Activated CD4-positive, alpha-beta memory T cell treated with anti-CD3 and anti-CD28 coated beads for 36 hours (primary cell): ENCODE measurements at regions of chr3 and their contacts with region 1.

Region 1: GRCh38 chr3:129249276-129250065 is at the start of gene COPG1:
- DNase-seq: peak; percentile 92
- H3K4me3 Mint-ChIP-seq: peak within 1 kb of the TSS; percentile 89
- H3K27ac Mint-ChIP-seq: peak within 1 kb of the TSS; percentile 93
- H3K4me1 Mint-ChIP-seq: peaks cover 38% of the 10 kb centered on the region
- H3K27me3 Mint-ChIP-seq: no peaks in the 10 kb centered on the region
- total RNA-seq, gene COPG1: 154 to 162 TPM

Region 2: GRCh38 chr3:129016356-129016719 is 233.1 kb before region 1 on chr3:
- CTCF ChIA-PET with region 1: interaction called, 14 read pairs
- POLR2A ChIA-PET with region 1: no interaction called
- intact Hi-C with region 1: no loop called
- DNase-seq: peak; percentile 80
- H3K4me3 Mint-ChIP-seq: peak overlapping the region; percentile 62
- H3K27ac Mint-ChIP-seq: peak overlapping the region; percentile 93
- H3K4me1 Mint-ChIP-seq: peaks cover 34% of the 10 kb centered on the region
- H3K27me3 Mint-ChIP-seq: no peaks in the 10 kb centered on the region

Region 3: GRCh38 chr3:129058441-129059200 is 190.8 kb before region 1 on chr3:
- CTCF ChIA-PET with region 1: interaction called, 113 read pairs
- POLR2A ChIA-PET with region 1: interaction called, 12 read pairs
- intact Hi-C with region 1: loop called (anchors 1 kb)
- DNase-seq: peak; percentile 38
- H3K4me3 Mint-ChIP-seq: no peak overlapping the region
- H3K27ac Mint-ChIP-seq: no peak overlapping the region
- H3K4me1 Mint-ChIP-seq: peaks cover 7% of the 10 kb centered on the region
- H3K27me3 Mint-ChIP-seq: no peaks in the 10 kb centered on the region

Region 4: GRCh38 chr3:129160891-129161859 is 88.3 kb before region 1 on chr3 and contains the start of gene ISY1:
- CTCF ChIA-PET with region 1: interaction called, 55 read pairs
- POLR2A ChIA-PET with region 1: interaction called, 6 read pairs
- intact Hi-C with region 1: loop called (anchors 1 kb)
- DNase-seq: peak; percentile 93
- H3K4me3 Mint-ChIP-seq: peak within 1 kb of the TSS; percentile 98
- H3K27ac Mint-ChIP-seq: peak within 1 kb of the TSS; percentile 100
- H3K4me1 Mint-ChIP-seq: peaks cover 31% of the 10 kb centered on the region
- H3K27me3 Mint-ChIP-seq: no peaks in the 10 kb centered on the region
- total RNA-seq, gene ISY1: 60.7 to 61.7 TPM

Region 5: GRCh38 chr3:129183569-129184395 is 65.7 kb before region 1 on chr3 and contains the start of gene CNBP:
- CTCF ChIA-PET with region 1: interaction called, 23 read pairs
- POLR2A ChIA-PET with region 1: interaction called, 9 read pairs
- intact Hi-C with region 1: loop called (anchors 1 kb)
- DNase-seq: peak; percentile 95
- H3K4me3 Mint-ChIP-seq: peak within 1 kb of the TSS; percentile 97
- H3K27ac Mint-ChIP-seq: peak within 1 kb of the TSS; percentile 96
- H3K4me1 Mint-ChIP-seq: peaks cover 27% of the 10 kb centered on the region
- H3K27me3 Mint-ChIP-seq: no peaks in the 10 kb centered on the region
- total RNA-seq, gene CNBP: 342 to 348 TPM

Region 6: DNA sequence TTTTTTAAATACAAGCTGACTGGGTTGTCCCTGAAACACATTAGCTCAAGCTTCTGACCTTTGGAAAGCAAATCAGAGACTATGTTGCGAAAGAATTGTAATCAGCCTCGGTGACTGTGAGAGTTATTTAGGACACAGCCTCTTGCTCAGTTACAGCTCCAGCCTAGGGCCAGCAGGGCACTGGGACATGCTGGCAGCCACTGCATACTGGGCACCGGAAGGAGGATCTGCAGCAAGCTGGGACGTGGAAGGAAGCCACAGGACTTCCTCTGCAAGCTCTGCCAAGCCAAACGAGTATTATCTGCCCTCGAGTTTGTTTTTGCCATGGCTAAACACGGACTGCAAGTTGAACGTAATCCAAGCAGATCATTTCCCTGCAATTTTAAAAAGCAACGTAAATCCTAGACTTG is 24.5 kb before region 1 on chr3:
- CTCF ChIA-PET with region 1: interaction called, 14 read pairs
- POLR2A ChIA-PET with region 1: interaction called, 6 read pairs
- intact Hi-C with region 1: no loop called
- DNase-seq: peak; percentile 38
- H3K4me3 Mint-ChIP-seq: peak overlapping the region; percentile 49
- H3K27ac Mint-ChIP-seq: peak overlapping the region; percentile 55
- H3K4me1 Mint-ChIP-seq: peaks cover 16% of the 10 kb centered on the region
- H3K27me3 Mint-ChIP-seq: no peaks in the 10 kb centered on the region

Region 7: GRCh38 chr3:129278439-129278970 is 29.0 kb after region 1 on chr3 and contains the start of gene HMCES:
- CTCF ChIA-PET with region 1: interaction called, 5 read pairs
- POLR2A ChIA-PET with region 1: interaction called, 9 read pairs
- intact Hi-C with region 1: loop called (anchors 2 kb)
- DNase-seq: peak; percentile 97
- H3K4me3 Mint-ChIP-seq: peak within 1 kb of the TSS; percentile 89
- H3K27ac Mint-ChIP-seq: peak within 1 kb of the TSS; percentile 90
- H3K4me1 Mint-ChIP-seq: peaks cover 52% of the 10 kb centered on the region
- H3K27me3 Mint-ChIP-seq: no peaks in the 10 kb centered on the region
- total RNA-seq, gene HMCES: 58.4 to 61.5 TPM

Region 8: DNA sequence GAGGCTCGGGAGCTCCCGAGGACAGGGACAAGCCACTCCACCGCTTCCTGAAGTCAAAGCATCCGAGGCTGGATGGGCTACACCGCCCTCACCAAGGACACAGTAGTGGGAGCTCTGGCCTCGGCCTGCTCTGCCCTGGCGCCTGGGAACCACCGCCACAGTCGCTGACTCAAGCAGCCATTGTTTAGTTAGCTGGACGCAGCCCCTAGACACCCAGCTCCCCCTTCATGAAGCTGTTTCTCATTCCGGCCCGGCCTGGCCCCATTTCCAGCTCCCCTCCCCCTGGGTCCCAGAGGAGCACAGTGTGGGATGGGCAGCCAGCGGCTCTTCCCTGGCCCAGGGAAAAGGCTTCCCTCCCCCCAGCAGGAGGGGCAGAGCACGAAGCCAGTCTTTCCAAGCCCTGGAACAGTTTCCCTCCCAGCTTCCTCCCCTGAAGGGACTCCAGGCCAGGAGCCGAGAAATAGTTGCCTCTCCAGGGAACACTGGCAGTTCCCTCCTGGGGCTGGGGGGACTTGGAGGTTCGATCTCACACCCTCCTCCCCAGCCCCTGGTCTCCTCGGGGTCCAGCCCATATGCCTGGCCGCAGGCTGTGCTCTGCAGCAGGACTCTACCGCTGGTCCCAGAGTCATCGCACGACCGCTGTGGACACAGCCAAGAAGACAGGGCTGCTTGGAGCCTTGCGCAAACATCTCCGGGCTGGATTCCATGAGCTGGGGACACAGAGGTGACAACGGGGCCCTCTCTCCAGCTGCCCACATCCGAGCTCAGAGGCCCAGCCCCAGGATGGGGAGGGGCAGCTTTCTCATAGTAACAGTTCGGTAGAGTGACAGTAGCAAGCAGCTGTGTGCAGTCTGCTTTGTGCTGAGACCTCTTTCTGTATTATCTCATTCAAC is 347.0 kb after region 1 on chr3:
- CTCF ChIA-PET with region 1: no interaction called
- POLR2A ChIA-PET with region 1: no interaction called
- intact Hi-C with region 1: no loop called
- DNase-seq: no peak
- H3K4me3 Mint-ChIP-seq: no peak overlapping the region
- H3K27ac Mint-ChIP-seq: no peak overlapping the region
- H3K4me1 Mint-ChIP-seq: peaks cover 14% of the 10 kb centered on the region
- H3K27me3 Mint-ChIP-seq: no peaks in the 10 kb centered on the region

Region 9: GRCh38 chr3:129663026-129663446 is 413.6 kb after region 1 on chr3:
- CTCF ChIA-PET with region 1: no interaction called
- POLR2A ChIA-PET with region 1: no interaction called
- intact Hi-C with region 1: no loop called
- DNase-seq: no peak
- H3K4me3 Mint-ChIP-seq: no peak overlapping the region
- H3K27ac Mint-ChIP-seq: no peak overlapping the region
- H3K4me1 Mint-ChIP-seq: peaks cover 5% of the 10 kb centered on the region
- H3K27me3 Mint-ChIP-seq: no peaks in the 10 kb centered on the region